ENCODE measurements at regions of chr7 and their contacts with region 1.

Region 1: GRCh38 chr7:116258734-116259133 is 48.4 kb downstream of the TES start:
- DNase-seq: peak; percentile 37

Region 2: DNA sequence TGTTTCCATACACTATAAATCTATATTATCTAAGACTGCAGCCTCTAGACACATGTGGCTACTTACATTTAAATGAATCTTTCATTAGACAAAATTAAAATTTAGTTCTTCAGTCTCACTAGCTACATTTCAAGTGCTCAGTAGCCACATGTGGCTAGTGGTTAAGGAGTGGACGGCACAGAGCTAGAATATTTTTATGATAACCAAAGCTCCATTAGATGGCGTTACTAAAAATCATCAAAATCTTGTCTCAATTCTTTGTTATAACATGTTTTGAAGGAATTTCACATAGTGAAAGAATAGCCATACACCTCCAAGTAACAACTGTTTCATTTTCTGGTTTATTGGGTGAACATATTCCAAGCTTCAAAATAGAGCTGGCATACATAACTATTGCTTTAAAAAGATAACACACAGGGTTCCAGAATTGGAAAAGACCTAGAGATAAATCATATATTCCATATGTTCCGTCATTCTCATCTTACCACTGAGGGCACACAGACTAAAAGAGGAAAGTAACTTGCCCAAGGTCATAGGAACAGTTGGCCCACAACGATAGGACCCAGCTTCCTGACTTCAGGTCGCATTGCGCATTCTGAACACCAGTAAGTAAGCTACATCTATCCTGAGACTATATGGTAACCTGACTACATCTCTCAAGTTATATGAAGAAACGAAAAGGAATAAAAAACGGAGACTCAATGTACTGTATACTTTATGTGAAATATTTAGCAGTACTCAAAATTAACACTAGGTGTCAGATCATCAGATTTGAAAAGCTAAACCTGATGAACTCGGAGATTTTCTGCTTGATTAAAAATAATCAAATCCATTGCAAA is 332.7 kb after region 1 on chr7:
- in situ Hi-C with region 1: loop called (anchors 10 kb)
- DNase-seq: peak; percentile 57